HCT116 (cell line): ENCODE measurements at regions of chr15 and their contacts with region 1.

Region 1: DNA sequence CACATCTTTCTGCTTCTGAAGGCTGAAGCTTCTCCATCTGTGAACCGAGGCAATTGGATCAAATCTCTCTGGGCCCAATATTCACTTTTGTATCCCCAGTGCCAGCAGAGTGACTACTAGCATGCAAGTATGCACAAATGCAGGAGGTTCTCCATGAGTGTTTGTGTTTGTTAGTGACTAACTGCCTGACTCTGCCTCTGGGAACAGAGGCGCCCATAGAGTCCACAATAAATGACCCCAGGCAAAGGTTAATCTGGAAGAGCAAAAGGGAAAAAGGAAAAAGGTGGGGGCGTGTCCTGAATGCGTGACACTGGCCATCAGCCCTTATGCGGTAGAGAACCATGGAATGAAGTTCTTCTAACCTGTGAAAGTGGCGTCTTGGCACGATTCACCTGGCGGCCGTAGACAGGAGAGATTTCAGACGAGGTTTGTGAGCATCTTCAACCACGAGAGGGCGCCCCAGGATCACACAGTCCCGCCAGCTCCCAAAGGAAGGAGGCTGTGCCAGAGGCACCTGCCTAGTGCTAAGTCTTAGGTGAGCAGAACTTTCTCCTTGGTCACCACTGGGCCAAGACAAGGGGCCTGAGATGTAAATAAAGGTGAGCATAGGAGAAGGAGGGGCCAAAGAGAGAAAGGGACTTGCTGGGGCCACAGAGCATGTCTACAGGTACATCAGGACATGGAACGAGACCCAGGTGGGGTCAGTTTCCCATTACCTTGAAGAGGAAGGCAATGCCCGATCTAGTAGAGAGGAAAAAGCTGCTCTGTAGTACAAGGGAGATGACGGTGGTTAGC is 44.2 kb downstream of the RBPMS2 start:
- DNase-seq: peak; percentile 75
- ATAC-seq: peak; percentile 92
- H3K4me3 ChIP-seq: no peak overlapping the region
- H3K27ac ChIP-seq: no peak overlapping the region
- H3K4me1 ChIP-seq: peaks cover 0 to 4% of the 10 kb centered on the region in 2 experiments; a peak in 1 of 4 replicates
- H3K27me3 ChIP-seq: no peaks in the 10 kb centered on the region
- CTCF ChIP-seq: peak; percentile 82 to 95 (median 93)
- POLR2A ChIP-seq: no peak
- RAD21 ChIP-seq: peak; percentile 99

Region 2: GRCh38 chr15:64162870-64163658 is 568.1 kb before region 1 on chr15 and contains the start of gene PPIB:
- CTCF ChIA-PET with region 1: interaction called, 13 read pairs
- POLR2A ChIA-PET with region 1: no interaction called
- RAD21 ChIA-PET with region 1: no interaction called
- intact Hi-C with region 1: no loop called
- DNase-seq: peak; percentile 88
- ATAC-seq: peak; percentile 95
- H3K4me3 ChIP-seq: peak within 1 kb of the TSS; percentile 85 to 97
- H3K27ac ChIP-seq: peak within 1 kb of the TSS; percentile 68
- H3K4me1 ChIP-seq: peaks cover 4 to 14% of the 10 kb centered on the region in 2 experiments; a peak in 3 of 4 replicates
- H3K27me3 ChIP-seq: no peaks in the 10 kb centered on the region
- CTCF ChIP-seq: peak; percentile 28 to 62 (median 52)
- POLR2A ChIP-seq: peak; percentile 48
- RAD21 ChIP-seq: peak; percentile 88
- total RNA-seq, gene PPIB: 453 TPM

Region 3: GRCh38 chr15:64681424-64682024 is 49.7 kb before region 1 on chr15:
- CTCF ChIA-PET with region 1: interaction called, 32 read pairs
- POLR2A ChIA-PET with region 1: no interaction called
- RAD21 ChIA-PET with region 1: interaction called, 4 to 6 read pairs
- intact Hi-C with region 1: loop called (anchors 1 kb)
- DNase-seq: peak; percentile 61
- ATAC-seq: peak; percentile 97
- H3K4me3 ChIP-seq: no peak overlapping the region
- H3K27ac ChIP-seq: no peak overlapping the region
- H3K4me1 ChIP-seq: no peaks in the 10 kb centered on the region
- H3K27me3 ChIP-seq: no peaks in the 10 kb centered on the region
- CTCF ChIP-seq: peak; percentile 88 to 99 (median 91)
- POLR2A ChIP-seq: no peak
- RAD21 ChIP-seq: peak; percentile 98

Region 4: GRCh38 chr15:64767203-64767602 is 36.0 kb after region 1 on chr15:
- CTCF ChIA-PET with region 1: no interaction called
- POLR2A ChIA-PET with region 1: no interaction called
- RAD21 ChIA-PET with region 1: no interaction called
- intact Hi-C with region 1: no loop called
- DNase-seq: no peak
- ATAC-seq: no peak
- H3K4me3 ChIP-seq: no peak overlapping the region
- H3K27ac ChIP-seq: no peak overlapping the region; the same call in 1 of the 2 replicates
- H3K4me1 ChIP-seq: peaks cover 5 to 18% of the 10 kb centered on the region in 2 experiments; a peak in 3 of 4 replicates
- H3K27me3 ChIP-seq: no peaks in the 10 kb centered on the region
- CTCF ChIP-seq: no peak
- POLR2A ChIP-seq: no peak
- RAD21 ChIP-seq: no peak

Region 5: GRCh38 chr15:64809649-64810496 is 78.7 kb after region 1 on chr15:
- CTCF ChIA-PET with region 1: interaction called, 73 read pairs
- POLR2A ChIA-PET with region 1: no interaction called
- RAD21 ChIA-PET with region 1: interaction called, 6 to 7 read pairs
- intact Hi-C with region 1: loop called (anchors 1 kb)
- DNase-seq: peak; percentile 57
- ATAC-seq: peak; percentile 96
- H3K4me3 ChIP-seq: no peak overlapping the region
- H3K27ac ChIP-seq: no peak overlapping the region
- H3K4me1 ChIP-seq: peaks cover 0 to 4% of the 10 kb centered on the region in 2 experiments; a peak in 2 of 4 replicates
- H3K27me3 ChIP-seq: no peaks in the 10 kb centered on the region
- CTCF ChIP-seq: peak; percentile 91 to 98 (median 97)
- POLR2A ChIP-seq: no peak
- RAD21 ChIP-seq: peak; percentile 95

Region 6: GRCh38 chr15:64847016-64847415 is 115.8 kb after region 1 on chr15:
- CTCF ChIA-PET with region 1: no interaction called
- POLR2A ChIA-PET with region 1: no interaction called
- RAD21 ChIA-PET with region 1: no interaction called
- intact Hi-C with region 1: no loop called
- DNase-seq: no peak
- ATAC-seq: no peak
- H3K4me3 ChIP-seq: no peak overlapping the region
- H3K27ac ChIP-seq: no peak overlapping the region
- H3K4me1 ChIP-seq: peaks cover 2 to 12% of the 10 kb centered on the region in 2 experiments; a peak in 2 of 4 replicates
- H3K27me3 ChIP-seq: no peaks in the 10 kb centered on the region
- CTCF ChIP-seq: no peak
- POLR2A ChIP-seq: no peak
- RAD21 ChIP-seq: no peak

Region 7: DNA sequence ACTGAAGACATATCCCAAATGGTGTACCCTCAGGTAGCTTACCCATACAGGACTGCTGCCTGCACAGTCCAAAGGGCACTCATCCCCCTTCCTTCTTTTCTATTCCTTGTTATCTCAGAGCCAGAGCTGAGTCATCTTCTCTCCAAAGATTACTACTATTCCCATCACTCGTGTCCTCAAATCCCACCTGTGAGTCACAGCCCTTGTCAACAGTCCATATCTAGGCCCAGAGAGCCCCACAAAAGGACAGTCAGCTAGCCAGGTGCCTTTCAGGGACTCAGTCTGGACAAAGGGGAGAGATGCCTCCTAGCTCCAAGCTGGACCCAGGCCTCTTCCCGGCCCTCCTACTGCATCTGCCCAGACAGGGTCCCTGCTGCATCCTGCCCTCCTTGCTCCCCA is 544.5 kb after region 1 on chr15:
- CTCF ChIA-PET with region 1: no interaction called
- POLR2A ChIA-PET with region 1: no interaction called
- RAD21 ChIA-PET with region 1: no interaction called
- intact Hi-C with region 1: loop called (anchors 10 kb)
- DNase-seq: no peak
- ATAC-seq: peak; percentile 53
- H3K4me3 ChIP-seq: peak overlapping the region in 1 of 2 experiments; percentile 8; a peak in 1 of 4 replicates
- H3K27ac ChIP-seq: peak overlapping the region; percentile 2; the same call in 1 of the 2 replicates
- H3K4me1 ChIP-seq: peaks cover 7 to 19% of the 10 kb centered on the region in 2 experiments
- H3K27me3 ChIP-seq: no peaks in the 10 kb centered on the region
- CTCF ChIP-seq: no peak
- POLR2A ChIP-seq: no peak
- RAD21 ChIP-seq: no peak